OCI-LY7 (cell line): ENCODE measurements at regions of chr2 and their contacts with region 1.

Region 1: GRCh38 chr2:94874277-94875008 is 3.2 kb downstream of the TEKT4 start:
- DNase-seq: peak; percentile 54
- H3K4me3 ChIP-seq: no peak overlapping the region
- H3K27ac ChIP-seq: no peak overlapping the region
- H3K4me1 ChIP-seq: no peaks in the 10 kb centered on the region
- CTCF ChIP-seq: peak; percentile 94

Region 2: DNA sequence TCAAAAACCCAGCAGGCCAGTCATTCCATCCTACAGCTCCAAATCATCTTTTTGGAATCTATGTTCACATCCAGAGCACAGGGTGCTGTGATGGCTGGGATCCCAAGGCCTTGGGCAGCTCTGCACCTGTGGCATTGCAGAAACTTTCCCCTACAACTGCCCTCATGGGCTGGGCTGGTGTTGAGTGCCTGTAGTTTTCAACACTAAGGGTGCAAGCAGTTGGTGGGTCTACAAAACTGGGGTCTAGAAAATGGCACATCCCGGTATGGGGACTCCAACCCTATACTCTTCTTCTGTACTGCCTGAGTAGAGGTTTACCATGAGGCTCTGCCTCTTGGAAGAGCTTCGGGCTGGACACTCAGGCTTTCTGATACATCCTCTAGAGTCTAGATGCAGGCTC is 98.4 kb before region 1 on chr2:
- CTCF ChIA-PET with region 1: no interaction called
- POLR2A ChIA-PET with region 1: no interaction called
- intact Hi-C with region 1: no loop called
- DNase-seq: no peak
- H3K4me3 ChIP-seq: no peak overlapping the region
- H3K27ac ChIP-seq: no peak overlapping the region
- H3K4me1 ChIP-seq: no peaks in the 10 kb centered on the region
- CTCF ChIP-seq: no peak

Region 3: DNA sequence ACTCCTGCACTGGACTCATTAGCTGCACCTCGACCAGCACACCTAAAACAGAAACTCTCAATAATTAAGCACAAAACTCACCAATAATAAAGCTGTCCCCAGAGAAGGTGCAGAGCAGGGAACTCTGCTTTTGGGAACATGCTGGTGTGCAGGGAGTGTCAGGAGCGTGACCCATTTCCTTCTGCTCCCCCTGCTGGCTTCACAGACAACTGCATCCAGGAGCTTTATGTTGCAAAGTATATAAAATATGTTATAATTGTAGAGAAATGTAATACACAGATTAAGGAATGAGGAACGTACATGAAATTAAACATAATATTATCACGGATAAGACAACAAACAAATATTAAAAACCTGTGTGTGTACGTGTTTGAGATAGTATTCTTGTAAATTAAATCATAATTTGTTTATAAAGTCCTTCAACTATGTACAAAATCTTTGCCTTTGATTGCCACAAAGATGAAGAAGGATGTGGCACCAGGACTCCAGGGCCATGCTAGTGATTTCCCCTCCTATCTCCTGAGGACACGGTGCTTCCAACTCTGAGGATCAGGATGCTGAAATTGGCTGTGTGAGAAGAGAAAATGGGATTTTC is 82.5 kb after region 1 on chr2:
- CTCF ChIA-PET with region 1: interaction called, 3 read pairs
- POLR2A ChIA-PET with region 1: no interaction called
- intact Hi-C with region 1: loop called (anchors 2 kb)
- DNase-seq: peak; percentile 40
- H3K4me3 ChIP-seq: no peak overlapping the region
- H3K27ac ChIP-seq: no peak overlapping the region
- H3K4me1 ChIP-seq: no peaks in the 10 kb centered on the region
- CTCF ChIP-seq: peak; percentile 86

Region 4: DNA sequence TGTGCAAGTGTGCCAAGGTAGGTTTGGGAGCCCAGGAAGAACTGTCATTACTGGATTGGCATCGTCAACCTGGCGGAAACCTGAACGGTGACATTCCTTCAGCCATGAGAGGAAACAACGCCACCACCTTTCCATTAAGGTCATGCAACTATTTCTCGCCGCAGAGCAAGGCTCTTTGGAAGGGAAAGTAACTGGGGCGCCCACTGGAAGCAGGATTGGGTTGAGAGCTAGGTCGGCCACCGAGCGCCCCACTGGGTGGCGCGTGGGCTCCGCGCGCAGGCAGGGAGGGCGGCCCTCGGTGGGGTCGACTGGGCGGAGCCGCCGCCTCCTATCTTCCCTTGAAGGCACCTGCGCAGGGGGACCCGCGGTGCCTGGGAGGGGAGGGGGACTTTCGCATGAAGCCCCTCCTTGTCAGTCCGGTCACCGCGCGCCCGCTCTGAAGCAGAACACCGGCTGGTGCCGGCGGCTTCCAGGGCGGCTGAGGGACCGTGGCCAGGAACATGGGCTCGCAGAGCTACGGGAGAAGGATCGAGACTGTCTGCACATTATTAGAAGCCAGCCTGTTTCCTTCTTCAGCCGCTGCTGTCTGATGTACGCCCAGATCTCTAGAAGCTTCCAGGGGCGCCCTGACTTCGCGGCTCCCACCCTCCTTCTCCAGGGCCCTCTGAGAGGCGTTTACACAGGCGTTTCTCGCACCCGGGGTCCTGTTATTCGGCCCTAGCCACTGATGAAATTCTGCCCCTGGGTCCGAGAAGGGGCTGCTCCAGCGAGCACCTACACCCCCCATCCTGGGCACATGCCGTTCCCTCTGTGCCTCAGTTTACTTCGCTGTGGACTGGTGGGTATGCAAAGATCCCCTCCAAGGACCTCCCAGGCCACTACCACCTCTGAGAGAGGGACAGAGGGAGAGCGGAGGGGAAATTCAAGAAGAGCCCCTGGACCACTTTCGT is 123.8 kb after region 1 on chr2:
- CTCF ChIA-PET with region 1: no interaction called
- POLR2A ChIA-PET with region 1: no interaction called
- intact Hi-C with region 1: no loop called
- DNase-seq: no peak
- H3K4me3 ChIP-seq: no peak overlapping the region
- H3K27ac ChIP-seq: no peak overlapping the region
- H3K4me1 ChIP-seq: no peaks in the 10 kb centered on the region
- CTCF ChIP-seq: no peak

Region 5: GRCh38 chr2:95012881-95013550 is 138.6 kb after region 1 on chr2:
- CTCF ChIA-PET with region 1: no interaction called
- POLR2A ChIA-PET with region 1: no interaction called
- intact Hi-C with region 1: no loop called
- DNase-seq: no peak
- H3K4me3 ChIP-seq: no peak overlapping the region
- H3K27ac ChIP-seq: no peak overlapping the region
- H3K4me1 ChIP-seq: no peaks in the 10 kb centered on the region
- CTCF ChIP-seq: no peak